ENCODE measurements at regions of chr2 and their contacts with region 1.

Region 1: DNA sequence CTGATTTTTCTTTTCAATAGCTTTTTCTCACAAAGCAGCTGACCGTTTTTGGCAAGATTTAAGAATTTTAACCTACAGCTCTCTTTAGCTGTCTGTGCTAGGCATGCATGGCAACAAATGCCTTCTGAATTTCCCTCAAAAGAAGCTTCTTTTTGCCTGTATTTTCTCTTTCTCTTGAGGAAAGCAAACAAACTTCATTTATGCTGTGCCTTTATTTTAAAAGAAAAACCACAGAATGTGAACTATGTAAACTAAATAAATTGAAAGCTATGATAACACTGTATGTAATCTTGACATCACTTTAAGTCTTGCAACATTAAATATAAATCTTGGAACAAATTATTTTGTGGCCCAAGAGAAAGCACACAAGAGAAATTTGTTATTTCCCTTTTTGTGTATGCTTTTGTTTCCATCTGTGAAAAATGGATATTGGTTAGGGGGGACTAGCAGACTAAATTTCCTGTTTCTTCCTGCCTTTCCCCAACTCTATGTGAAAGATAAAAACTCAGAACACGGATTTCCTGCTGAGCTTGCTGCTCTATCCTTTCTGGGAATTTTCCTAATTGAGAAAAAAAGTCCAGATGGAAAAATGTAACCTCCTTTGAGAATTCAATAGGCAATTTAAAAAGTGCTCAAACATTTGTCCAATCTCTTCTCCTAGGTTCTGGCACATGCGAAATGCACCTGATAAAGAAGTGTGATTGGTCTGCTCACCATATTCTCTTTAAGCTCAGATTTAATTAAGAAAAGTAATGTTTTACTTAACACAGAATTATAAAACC is 20.9 kb upstream of the TFPI start:
- DNase-seq: peak in 1 of 2 donors; percentile 30
- H3K4me3 ChIP-seq: no peak overlapping the region
- H3K27ac ChIP-seq: peak overlapping the region in 1 of 5 donors; percentile 38
- H3K4me1 ChIP-seq: peaks cover 0 to 26% (median 14%) of the 10 kb centered on the region in 4 donors
- H3K27me3 ChIP-seq: no peaks in the 10 kb centered on the region
- CTCF ChIP-seq: no peak
- EP300 ChIP-seq: no peak
- POLR2A ChIP-seq: no peak

Region 2: GRCh38 chr2:187509667-187510417 is 65.3 kb before region 1 on chr2:
- intact Hi-C with region 1: loop called (anchors 5 kb)
- DNase-seq: peak in 1 of 2 donors; percentile 23
- H3K4me3 ChIP-seq: no peak overlapping the region
- H3K27ac ChIP-seq: no peak overlapping the region
- H3K4me1 ChIP-seq: no peaks in the 10 kb centered on the region
- H3K27me3 ChIP-seq: no peaks in the 10 kb centered on the region
- CTCF ChIP-seq: no peak
- EP300 ChIP-seq: no peak
- POLR2A ChIP-seq: no peak

Region 3: DNA sequence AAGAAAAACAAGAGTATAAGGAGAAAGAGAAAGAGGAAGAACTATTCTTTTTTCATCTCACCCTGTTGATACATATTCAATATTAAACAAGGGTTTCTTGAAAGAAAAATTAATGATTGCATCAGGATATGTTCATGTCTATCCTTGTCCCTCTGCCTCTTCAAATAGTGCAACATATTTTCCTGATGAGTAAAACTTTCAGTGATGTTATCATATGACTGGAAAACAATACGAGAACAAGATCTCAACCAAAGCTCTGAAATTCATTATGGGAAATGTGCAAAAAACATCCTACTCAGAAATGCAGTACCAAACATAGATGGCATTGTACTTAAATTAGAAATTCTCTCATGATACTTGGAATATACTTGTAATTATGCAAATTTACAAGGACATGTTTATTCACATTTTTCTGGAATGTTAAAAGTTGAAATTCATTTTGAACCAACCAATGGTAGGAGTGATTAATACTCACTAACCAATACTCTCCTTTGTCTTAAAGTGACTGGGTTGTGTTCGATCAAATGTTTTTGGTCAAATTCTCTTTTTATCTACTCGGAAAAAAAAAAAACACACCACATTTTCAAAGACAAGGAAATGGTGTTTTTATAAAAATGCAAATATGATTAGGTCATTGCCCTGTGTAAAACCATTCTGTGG is 567.6 kb after region 1 on chr2:
- intact Hi-C with region 1: no loop called
- DNase-seq: no peak
- H3K4me3 ChIP-seq: no peak overlapping the region
- H3K27ac ChIP-seq: no peak overlapping the region
- H3K4me1 ChIP-seq: peaks cover 0 to 4% (median 0%) of the 10 kb centered on the region in 4 donors
- H3K27me3 ChIP-seq: no peaks in the 10 kb centered on the region
- CTCF ChIP-seq: no peak
- EP300 ChIP-seq: no peak
- POLR2A ChIP-seq: no peak